WTC11 (cell line): ENCODE measurements at regions of chr11 and their contacts with region 1.

Region 1: GRCh38 chr11:1628506-1629325 is 859 bp upstream of the KRTAP5-5 start:
- DNase-seq: peak; percentile 80
- ATAC-seq: peak; percentile 97
- H3K4me3 Mint-ChIP-seq: no peak overlapping the region
- H3K27ac Mint-ChIP-seq: no peak overlapping the region
- H3K4me1 Mint-ChIP-seq: peaks cover 16% of the 10 kb centered on the region
- H3K27me3 Mint-ChIP-seq: peaks cover 41% of the 10 kb centered on the region
- CTCF ChIP-seq: peak; percentile 91

Region 2: GRCh38 chr11:1335811-1336761 is 292.6 kb before region 1 on chr11:
- CTCF ChIA-PET with region 1: no interaction called
- POLR2A ChIA-PET with region 1: no interaction called
- DNase-seq: peak; percentile 71
- ATAC-seq: peak; percentile 64
- H3K4me3 Mint-ChIP-seq: peak overlapping the region; percentile 72
- H3K27ac Mint-ChIP-seq: no peak overlapping the region
- H3K4me1 Mint-ChIP-seq: peaks cover 7% of the 10 kb centered on the region
- H3K27me3 Mint-ChIP-seq: peaks cover 46% of the 10 kb centered on the region
- CTCF ChIP-seq: no peak

Region 3: GRCh38 chr11:1640076-1640946 is 11.6 kb after region 1 on chr11:
- CTCF ChIA-PET with region 1: interaction called, 45 read pairs
- POLR2A ChIA-PET with region 1: no interaction called
- DNase-seq: peak; percentile 74
- ATAC-seq: peak; percentile 94
- H3K4me3 Mint-ChIP-seq: no peak overlapping the region
- H3K27ac Mint-ChIP-seq: no peak overlapping the region
- H3K4me1 Mint-ChIP-seq: peaks cover 3% of the 10 kb centered on the region
- H3K27me3 Mint-ChIP-seq: peaks cover 4% of the 10 kb centered on the region
- CTCF ChIP-seq: peak; percentile 83

Region 4: DNA sequence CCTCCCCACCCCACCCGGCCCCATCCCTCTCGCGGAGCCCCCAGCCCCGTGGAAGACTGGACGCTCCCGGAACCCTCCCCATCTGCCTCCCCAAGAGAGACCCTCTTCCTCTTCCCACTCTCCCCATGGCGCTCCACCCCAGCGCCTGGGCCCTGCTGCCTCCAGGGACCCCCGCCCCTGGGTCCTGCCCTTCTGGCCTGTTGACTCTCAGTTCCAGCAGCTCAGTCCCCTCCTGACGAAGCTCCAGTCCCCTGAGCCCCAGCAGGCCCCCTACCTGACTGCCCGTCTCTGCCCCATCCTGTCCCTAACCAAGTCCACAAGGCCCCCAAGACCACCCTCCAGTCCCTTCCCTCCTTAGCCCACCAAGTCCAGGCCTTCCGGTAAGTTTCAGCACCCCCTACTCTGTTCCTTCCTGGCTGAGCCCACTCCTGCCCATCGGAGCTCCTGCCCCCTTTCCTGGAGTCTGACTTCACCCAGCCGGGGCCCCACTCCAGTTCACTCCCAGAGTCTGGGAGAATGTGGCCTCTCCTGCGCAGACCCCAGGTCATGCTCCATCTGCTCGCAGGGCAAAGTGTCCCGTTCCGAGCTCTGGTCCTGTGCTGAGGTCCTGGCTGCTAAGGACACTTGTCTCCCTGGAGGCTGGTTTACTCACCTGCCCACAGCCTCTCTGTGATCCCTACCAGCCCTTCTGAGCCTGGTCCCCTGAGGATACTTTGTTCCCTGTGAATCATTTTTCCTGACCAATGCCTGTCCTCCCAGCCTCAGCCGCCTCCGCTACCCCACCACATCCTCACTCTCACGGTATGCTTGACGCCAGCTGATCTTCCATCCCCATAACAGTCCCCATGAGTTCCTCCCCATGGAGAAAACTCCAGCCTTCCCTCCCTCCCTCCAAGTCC is 120.9 kb after region 1 on chr11:
- CTCF ChIA-PET with region 1: no interaction called
- POLR2A ChIA-PET with region 1: no interaction called
- DNase-seq: no peak
- ATAC-seq: peak; percentile 6
- H3K4me3 Mint-ChIP-seq: peak overlapping the region; percentile 57
- H3K27ac Mint-ChIP-seq: no peak overlapping the region
- H3K4me1 Mint-ChIP-seq: peaks cover 12% of the 10 kb centered on the region
- H3K27me3 Mint-ChIP-seq: peaks cover 51% of the 10 kb centered on the region
- CTCF ChIP-seq: no peak